ENCODE measurements at regions of chr9 and their contacts with region 1.

Region 1: DNA sequence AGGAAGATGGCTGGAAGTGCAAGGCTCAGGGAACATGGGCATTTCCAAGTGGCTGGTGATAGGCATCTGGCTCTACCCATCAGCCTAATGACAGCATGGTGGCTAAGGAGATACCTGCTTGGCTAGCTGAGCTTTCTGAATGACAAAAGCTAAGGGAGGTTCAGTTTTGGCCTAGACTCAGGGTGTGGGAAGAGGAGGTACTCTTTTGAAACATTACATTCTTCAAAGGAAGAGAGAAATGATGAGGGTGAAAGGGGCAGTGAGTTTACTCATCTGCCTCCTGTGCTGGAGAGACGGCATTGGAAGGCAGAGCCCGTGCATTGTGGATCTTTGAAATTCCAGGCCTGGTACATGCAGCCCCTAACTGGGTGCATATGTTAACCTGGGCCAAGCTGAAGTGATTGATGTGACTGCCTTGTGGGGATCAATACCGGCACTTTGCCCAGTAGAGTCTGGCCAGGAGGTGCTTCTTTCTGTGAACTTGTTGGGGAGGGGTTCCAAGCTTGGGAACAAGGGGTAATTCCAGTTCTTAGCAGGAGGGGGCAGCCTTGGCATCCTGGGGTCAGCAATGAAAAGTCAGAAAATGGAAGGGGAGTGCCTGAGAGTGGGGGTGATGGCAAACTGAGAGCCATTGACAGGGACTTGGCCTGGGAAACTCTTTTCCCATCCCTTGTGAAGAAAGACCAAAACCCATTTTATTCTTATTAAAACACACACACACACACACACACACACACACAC is 108.6 kb downstream of the ACER2 start:
- DNase-seq: peak; percentile 12
- H3K4me3 ChIP-seq: no peak overlapping the region
- H3K27ac ChIP-seq: no peak overlapping the region
- H3K4me1 ChIP-seq: no peaks in the 10 kb centered on the region
- H3K27me3 ChIP-seq: peaks cover 5% of the 10 kb centered on the region
- CTCF ChIP-seq: peak; percentile 46 to 67

Region 2: GRCh38 chr9:19379697-19380046 is 137.7 kb before region 1 on chr9:
- CTCF ChIA-PET with region 1: no interaction called
- dilution Hi-C with region 1: no loop called
- in situ Hi-C with region 1: no loop called
- intact Hi-C with region 1: no loop called
- DNase-seq: no peak
- H3K4me3 ChIP-seq: peak overlapping the region; percentile 59 to 72 (median 60)
- H3K27ac ChIP-seq: peak overlapping the region; percentile 77
- H3K4me1 ChIP-seq: peaks cover 15% of the 10 kb centered on the region
- H3K27me3 ChIP-seq: no peaks in the 10 kb centered on the region
- CTCF ChIP-seq: no peak

Region 3: DNA sequence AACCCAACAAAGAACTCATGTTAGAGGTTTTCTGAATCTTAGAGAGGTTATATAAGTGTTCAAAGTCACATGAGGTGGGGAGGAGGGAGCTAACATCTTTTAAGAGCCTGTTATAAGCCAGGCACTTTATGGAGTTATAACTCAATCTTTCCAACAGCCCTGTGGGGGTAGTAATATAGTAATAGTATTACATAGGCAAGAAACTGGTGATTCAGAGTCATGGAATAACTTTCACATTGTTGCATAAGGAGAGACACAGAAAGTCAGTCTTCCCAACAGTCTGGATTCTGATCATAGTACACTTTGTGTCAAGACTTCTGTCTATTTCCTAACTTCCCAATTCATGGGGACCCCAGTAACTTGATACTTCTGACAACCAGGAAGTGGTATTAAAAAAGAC is 19.4 kb before region 1 on chr9:
- CTCF ChIA-PET with region 1: no interaction called
- dilution Hi-C with region 1: no loop called
- in situ Hi-C with region 1: no loop called
- intact Hi-C with region 1: no loop called
- DNase-seq: peak; percentile 17
- H3K4me3 ChIP-seq: no peak overlapping the region
- H3K27ac ChIP-seq: no peak overlapping the region
- H3K4me1 ChIP-seq: peaks cover 4% of the 10 kb centered on the region
- H3K27me3 ChIP-seq: peaks cover 2% of the 10 kb centered on the region
- CTCF ChIP-seq: no peak

Region 4: GRCh38 chr9:19895006-19895405 is 377.6 kb after region 1 on chr9:
- CTCF ChIA-PET with region 1: no interaction called
- dilution Hi-C with region 1: loop called (anchors 5 kb)
- in situ Hi-C with region 1: no loop called
- intact Hi-C with region 1: no loop called
- DNase-seq: no peak
- H3K4me3 ChIP-seq: no peak overlapping the region
- H3K27ac ChIP-seq: no peak overlapping the region
- H3K4me1 ChIP-seq: no peaks in the 10 kb centered on the region
- H3K27me3 ChIP-seq: no peaks in the 10 kb centered on the region
- CTCF ChIP-seq: no peak

Region 5: GRCh38 chr9:19901586-19901985 is 384.2 kb after region 1 on chr9:
- CTCF ChIA-PET with region 1: interaction called, 16 read pairs
- dilution Hi-C with region 1: no loop called
- in situ Hi-C with region 1: no loop called
- intact Hi-C with region 1: no loop called
- DNase-seq: no peak
- H3K4me3 ChIP-seq: no peak overlapping the region
- H3K27ac ChIP-seq: no peak overlapping the region
- H3K4me1 ChIP-seq: peaks cover 9% of the 10 kb centered on the region
- H3K27me3 ChIP-seq: no peaks in the 10 kb centered on the region
- CTCF ChIP-seq: no peak

Measured in mammary epithelial cell (primary cell).